Astrocyte of the cerebellum (primary cell): ENCODE measurements at regions of chr2 and their contacts with region 1.

Region 1: DNA sequence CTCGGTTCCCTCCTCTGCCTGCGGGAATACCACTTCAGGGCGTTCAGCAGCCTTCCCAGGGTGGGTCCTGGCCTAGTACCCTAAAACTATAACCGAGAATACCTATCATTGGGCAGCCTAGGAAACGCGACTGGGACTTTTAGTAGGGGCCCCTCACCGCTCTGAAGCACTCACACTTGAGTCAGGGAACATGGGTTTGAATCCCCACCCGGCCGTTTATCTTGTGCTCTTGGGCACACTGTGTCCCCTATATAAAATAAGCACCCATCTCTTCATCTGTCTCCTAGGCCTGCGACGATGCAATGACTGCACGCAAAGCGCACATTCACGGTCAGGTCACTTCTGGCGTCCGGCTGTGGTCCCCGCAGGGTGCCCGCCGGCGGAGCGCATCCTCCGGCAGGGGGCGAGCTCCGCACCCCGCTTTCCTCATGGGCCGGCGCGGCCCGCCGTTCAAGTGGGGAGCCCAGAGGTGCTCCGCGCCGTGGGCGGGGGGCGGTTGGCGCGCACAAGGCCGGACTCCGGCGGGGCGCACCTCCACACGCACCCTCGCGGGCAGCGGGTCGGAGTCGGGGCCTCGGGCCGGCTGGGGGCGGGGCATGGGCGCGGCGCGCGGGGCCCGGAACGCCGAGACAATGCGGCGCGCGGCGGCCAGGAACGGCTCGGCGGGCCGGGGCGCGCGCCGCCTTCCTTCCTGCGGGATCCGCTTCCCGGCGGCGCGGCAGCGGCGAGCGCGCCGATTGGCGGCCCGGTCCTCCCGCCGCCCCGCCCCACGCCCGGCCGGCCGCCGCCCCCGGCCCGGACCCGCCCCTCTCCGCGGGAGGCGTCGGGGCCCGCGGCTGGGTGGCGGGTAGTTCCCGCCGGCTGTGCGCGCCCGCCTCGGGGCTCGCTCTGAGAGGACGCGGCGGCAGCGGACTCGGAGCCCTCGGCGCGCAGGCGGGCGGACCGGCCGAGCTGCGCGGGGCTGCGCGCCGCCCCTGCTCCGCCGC is at the start of gene ASAP2:
- DNase-seq: no peak
- H3K4me3 ChIP-seq: peak within 1 kb of the TSS; percentile 57
- CTCF ChIP-seq: peak; percentile 77

Region 2: GRCh38 chr2:8743261-8743660 is 463.0 kb before region 1 on chr2:
- in situ Hi-C with region 1: no loop called
- DNase-seq: no peak
- H3K4me3 ChIP-seq: no peak overlapping the region
- CTCF ChIP-seq: no peak

Region 3: GRCh38 chr2:9071032-9071431 is 135.2 kb before region 1 on chr2:
- in situ Hi-C with region 1: no loop called
- DNase-seq: no peak
- H3K4me3 ChIP-seq: no peak overlapping the region
- CTCF ChIP-seq: no peak

Region 4: GRCh38 chr2:9142551-9143263 is 63.5 kb before region 1 on chr2:
- in situ Hi-C with region 1: loop called (anchors 5 kb)
- DNase-seq: peak; percentile 56
- H3K4me3 ChIP-seq: peak overlapping the region; percentile 19
- CTCF ChIP-seq: peak; percentile 94

Region 5: GRCh38 chr2:9163306-9164111 is 42.7 kb before region 1 on chr2:
- in situ Hi-C with region 1: no loop called
- DNase-seq: no peak
- H3K4me3 ChIP-seq: no peak overlapping the region
- CTCF ChIP-seq: no peak

Region 6: GRCh38 chr2:9238591-9239326 is 32.5 kb after region 1 on chr2:
- in situ Hi-C with region 1: no loop called
- DNase-seq: no peak
- H3K4me3 ChIP-seq: no peak overlapping the region
- CTCF ChIP-seq: no peak

Region 7: GRCh38 chr2:9291331-9291730 is 85.1 kb after region 1 on chr2:
- in situ Hi-C with region 1: loop called (anchors 5 kb)
- DNase-seq: no peak
- H3K4me3 ChIP-seq: no peak overlapping the region
- CTCF ChIP-seq: no peak